ENCODE measurements at regions of chr3 and their contacts with region 1.

Region 1: GRCh38 chr3:161217496-161217895 is 3.6 kb upstream of the NMD3 start:
- DNase-seq: no peak

Region 2: GRCh38 chr3:160464971-160465370 is 752.5 kb before region 1 on chr3:
- intact Hi-C with region 1: loop called (anchors 5 kb)
- DNase-seq: no peak

Region 3: GRCh38 chr3:160876643-160877042 is 340.9 kb before region 1 on chr3:
- intact Hi-C with region 1: no loop called
- DNase-seq: peak in 1 of 10 donors; percentile 66

Region 4: DNA sequence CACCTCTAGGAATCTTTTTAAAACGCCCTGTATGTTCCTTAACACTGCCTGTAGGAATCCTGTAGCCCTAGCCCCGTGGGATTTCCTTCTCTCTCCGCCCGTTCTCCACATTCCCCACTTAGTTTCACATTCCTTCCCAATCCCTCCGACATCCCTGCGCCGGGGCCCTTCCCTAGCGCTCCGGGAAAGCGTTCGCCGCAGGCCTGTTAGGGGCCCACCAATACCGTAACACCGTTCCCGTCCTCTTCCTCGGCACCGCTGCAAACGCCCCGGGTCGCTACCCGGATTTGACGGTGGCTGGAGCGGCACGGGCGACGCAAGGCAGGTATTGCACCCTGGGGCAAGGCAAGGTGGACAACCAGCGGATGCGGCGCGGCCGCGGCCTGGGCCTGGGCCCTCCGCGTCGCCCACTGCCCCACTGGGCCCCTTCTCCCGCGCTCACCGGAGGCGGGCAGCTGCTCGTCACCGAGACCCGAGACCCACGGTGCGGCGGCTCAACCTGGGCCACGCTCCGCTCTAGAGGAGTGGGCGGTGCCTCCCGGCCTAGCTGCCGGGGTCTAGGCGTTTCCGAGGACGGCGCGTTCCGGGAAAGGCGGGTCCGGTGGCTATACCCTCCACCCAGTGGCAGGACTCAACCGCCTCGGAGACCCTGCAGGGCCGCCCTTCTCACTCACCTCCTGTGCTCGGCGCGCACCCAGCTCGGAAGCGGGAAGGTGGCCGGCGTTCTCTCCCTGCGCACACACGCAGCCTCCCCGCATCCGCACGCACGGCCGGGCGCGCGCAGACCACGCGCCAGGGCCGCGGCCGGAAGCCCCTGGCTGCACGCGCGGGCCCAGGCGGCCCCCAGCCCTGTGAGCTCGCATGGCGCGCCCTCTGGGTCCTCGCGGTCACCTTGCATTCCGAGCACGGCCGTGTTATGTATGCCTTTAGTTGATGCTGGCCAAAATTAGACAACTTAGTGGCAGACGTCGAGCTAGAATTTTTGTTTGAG is 112.6 kb before region 1 on chr3 and contains the start of gene B3GALNT1:
- intact Hi-C with region 1: loop called (anchors 10 kb)
- DNase-seq: peak; percentile 22 to 92 (median 48)

Region 5: DNA sequence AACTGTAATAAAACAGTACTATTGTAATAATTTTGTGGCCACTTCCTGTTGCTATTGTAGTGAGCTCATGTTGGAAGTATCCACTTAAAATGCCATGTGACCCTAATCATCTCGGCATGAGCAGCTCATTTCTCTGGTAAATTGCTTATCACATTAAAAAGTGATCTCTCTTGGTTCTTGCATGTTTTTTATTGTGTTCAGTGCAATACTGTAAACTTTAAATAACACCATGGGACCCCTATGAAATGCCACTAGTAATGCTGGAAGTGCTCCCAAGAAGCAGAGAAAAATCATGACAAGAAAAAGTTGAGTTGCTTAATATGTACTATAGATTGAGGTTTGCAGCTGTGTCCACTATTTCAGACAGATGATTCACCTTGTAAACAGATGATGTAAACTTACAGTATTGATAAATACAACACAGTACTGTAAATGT is 49.3 kb after region 1 on chr3:
- intact Hi-C with region 1: no loop called
- DNase-seq: no peak

Measured in posterior cingulate gyrus (tissue), 11 donors.